ENCODE measurements at regions of chr4 and their contacts with region 1.

Region 1: DNA sequence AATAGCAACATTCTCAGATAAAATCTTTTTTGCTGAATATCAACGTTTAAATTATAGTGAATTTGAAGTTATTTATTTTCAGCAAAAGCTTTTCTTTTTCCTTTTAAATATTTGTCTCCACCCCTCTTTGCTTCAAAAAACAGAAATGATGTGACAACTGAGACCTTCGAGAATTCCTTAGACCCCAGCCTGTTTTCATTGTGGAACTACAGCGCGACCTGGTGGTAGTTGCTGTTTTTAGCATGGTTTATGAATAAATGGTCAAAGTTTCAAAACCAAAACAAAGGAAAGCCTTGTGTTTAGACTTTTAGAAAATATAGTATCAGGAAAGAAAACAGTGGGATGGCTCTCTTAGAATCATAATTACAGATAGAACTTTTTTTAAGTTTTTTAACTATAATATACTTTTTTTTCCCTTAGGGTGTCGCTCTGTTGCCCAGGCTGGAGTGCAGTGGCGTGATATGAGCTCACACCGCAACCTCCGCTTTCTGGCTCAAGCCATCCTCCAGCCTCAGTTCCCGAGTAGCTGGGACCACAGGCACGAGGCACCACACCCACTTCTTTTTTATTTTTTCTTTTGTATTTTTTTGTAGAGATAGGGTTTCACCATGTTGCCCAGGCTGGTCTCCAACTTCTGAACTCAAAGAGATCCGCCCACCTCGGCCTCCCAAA is 26.8 kb upstream of the TMEM184C start:
- DNase-seq: peak; percentile 59
- H3K4me3 ChIP-seq: no peak overlapping the region
- H3K27ac ChIP-seq: no peak overlapping the region
- H3K27me3 ChIP-seq: no peaks in the 10 kb centered on the region
- CTCF ChIP-seq: peak; percentile 85

Region 2: GRCh38 chr4:147019061-147019460 is 571.3 kb before region 1 on chr4:
- CTCF ChIA-PET with region 1: interaction called, 33 read pairs
- POLR2A ChIA-PET with region 1: no interaction called
- DNase-seq: peak; percentile 13
- H3K4me3 ChIP-seq: no peak overlapping the region
- H3K27ac ChIP-seq: no peak overlapping the region
- H3K27me3 ChIP-seq: no peaks in the 10 kb centered on the region
- CTCF ChIP-seq: peak; percentile 69

Region 3: DNA sequence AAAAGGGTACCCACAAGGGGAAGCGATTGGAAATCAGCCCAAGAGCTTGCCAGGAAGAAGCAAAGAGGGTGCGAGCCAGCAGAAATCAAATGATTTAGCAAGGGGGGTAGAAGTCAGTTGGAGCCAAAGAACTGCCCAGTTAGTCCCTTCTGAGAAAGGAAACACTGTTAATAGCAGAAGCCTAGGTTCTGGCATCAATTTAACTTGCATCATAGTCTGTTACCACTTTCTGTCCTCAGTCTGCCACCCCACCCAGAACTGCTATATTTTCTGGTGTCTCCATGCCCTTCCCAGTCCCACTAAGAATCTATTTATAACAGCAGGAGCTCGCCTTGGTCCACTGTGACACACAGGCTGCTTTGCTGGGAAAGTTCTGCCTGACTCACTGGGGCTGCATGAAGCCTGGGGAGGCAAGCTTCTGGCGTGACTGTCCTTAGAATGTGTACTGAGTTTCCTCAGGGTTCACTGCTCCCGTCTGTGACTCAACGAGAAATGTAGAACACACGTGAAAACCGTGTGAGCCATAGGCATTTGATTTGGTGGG is 486.9 kb before region 1 on chr4:
- CTCF ChIA-PET with region 1: interaction called, 106 read pairs
- POLR2A ChIA-PET with region 1: interaction called, 3 read pairs
- DNase-seq: peak; percentile 81
- H3K4me3 ChIP-seq: no peak overlapping the region; the same call in 1 of the 2 replicates
- H3K27ac ChIP-seq: peak overlapping the region; percentile 85
- H3K27me3 ChIP-seq: peaks cover 2% of the 10 kb centered on the region
- CTCF ChIP-seq: no peak

Region 4: DNA sequence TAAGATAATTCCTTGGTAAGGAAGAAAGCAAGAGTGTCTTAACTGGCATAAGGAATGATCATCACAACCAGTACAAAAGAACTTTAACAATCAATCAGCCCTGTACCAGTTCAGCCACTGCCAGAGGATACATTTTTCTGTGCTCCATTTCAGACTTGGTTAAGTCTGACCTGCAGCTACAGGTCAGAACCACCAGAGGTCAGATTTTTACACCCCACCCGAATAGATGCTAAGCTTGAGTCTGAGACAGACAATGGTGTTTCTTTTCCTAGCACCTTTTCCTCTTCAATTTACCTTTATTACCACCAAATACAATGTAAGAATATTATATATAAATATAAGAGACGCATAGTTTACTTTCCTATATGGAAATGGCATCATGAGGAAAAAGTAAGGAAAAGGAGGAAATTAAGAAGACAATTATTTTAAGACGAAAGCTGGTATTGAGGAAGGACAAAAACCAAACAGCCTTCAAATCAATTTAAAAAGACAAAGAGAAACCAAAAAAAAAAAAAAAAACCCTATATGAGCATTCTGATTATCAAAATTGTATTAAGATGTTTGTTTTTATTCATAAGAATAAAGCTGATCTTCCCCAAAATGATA is 429.4 kb before region 1 on chr4:
- CTCF ChIA-PET with region 1: interaction called, 73 read pairs
- POLR2A ChIA-PET with region 1: no interaction called
- DNase-seq: peak; percentile 16
- H3K4me3 ChIP-seq: no peak overlapping the region
- H3K27ac ChIP-seq: no peak overlapping the region
- H3K27me3 ChIP-seq: no peaks in the 10 kb centered on the region
- CTCF ChIP-seq: peak; percentile 89

Region 5: DNA sequence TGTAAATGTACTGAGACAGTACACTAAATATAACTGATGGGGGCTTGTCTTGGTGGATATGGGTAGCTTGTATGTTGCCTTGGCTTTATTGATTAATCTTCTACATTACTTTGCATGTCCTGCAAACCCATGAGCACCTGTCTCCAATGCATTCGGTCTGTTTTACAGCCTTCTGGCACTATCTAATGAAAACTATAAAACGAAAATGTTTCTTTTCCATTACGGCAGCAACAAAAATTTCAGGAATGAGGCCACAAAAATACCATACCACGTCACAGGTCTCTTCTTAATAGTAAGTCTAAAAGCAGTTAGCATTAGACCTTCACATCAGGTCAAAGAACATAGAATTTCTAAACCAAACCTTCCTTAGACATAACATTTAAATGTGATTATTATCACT is 59.7 kb before region 1 on chr4:
- CTCF ChIA-PET with region 1: no interaction called
- POLR2A ChIA-PET with region 1: no interaction called
- DNase-seq: no peak
- H3K4me3 ChIP-seq: no peak overlapping the region
- H3K27ac ChIP-seq: no peak overlapping the region
- H3K27me3 ChIP-seq: no peaks in the 10 kb centered on the region
- CTCF ChIP-seq: no peak

Region 6: DNA sequence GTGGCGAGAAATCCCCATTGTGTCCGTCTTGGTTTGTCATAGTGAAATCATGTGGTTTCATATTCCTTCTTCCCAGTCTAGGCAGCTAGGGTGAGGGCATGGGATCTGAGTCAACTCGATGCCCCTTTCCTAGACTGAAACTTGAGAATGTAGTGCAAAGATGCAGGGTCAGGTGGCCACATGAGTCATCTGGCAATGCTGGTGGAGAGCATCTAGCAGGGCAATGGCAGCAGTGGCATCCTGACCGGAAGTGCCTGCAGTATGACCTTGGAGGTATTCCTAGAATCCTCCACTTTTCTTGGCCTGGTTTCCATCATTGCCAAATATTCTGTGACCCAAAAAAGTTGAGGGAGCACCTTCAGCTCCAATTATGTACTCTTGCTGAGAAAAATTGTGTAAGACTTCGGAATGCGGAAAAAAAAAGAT is 12.3 kb before region 1 on chr4:
- CTCF ChIA-PET with region 1: interaction called, 22 read pairs
- POLR2A ChIA-PET with region 1: no interaction called
- DNase-seq: peak; percentile 86
- H3K4me3 ChIP-seq: no peak overlapping the region
- H3K27ac ChIP-seq: no peak overlapping the region
- H3K27me3 ChIP-seq: no peaks in the 10 kb centered on the region
- CTCF ChIP-seq: no peak

Measured in AG04450 (cell line).